CD14-positive monocyte (primary cell): ENCODE measurements at regions of chr19 and their contacts with region 1.

Region 1: DNA sequence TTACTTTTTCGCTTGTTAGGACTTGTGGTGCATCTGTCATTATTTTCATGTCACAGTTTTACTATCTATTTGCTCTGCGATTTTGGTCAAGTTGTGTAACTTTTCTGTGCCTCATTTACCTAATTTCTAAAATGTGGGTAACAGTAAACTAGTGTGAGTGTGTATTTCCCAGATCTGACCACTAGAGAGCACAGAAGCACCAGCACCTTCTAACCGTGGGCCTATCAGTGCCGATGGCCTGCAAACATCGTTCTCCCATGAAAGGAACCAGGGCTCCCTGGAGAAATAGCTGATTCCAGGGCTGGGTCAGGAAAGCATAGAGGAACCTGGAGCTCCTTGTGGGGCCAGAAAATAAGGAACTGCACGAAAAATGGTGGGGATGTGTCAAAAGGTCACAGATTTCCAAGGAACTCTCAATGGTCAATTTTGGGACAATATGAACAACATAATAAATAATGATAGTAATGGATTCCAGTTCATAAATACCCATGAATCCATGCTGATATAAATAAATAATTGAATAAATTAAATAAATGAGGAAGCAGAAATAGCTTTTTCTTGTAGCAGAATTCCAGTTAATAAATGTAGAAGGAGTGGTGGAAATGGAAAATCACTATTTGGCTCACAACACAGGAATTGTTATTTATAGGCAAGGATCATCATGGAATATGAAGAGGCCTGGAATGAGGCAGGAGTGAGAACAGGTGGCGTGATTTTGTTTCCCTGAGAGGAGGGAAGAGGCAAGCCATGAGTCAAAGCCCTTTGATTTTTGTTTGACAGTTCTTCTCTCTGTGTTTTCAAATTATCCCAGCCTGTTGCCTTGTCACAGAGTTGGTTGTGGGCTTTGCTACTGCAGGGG is 31.1 kb downstream of the CEACAM8 start:
- DNase-seq: peak; percentile 30 to 51 (median 50)
- H3K4me3 ChIP-seq: no peak overlapping the region
- H3K4me3 Mint-ChIP-seq: no peak overlapping the region
- H3K27ac ChIP-seq: no peak overlapping the region
- H3K27ac Mint-ChIP-seq: no peak overlapping the region
- H3K4me1 ChIP-seq: peaks cover 32 to 33% of the 10 kb centered on the region in 2 donors
- H3K4me1 Mint-ChIP-seq: peaks cover 43% of the 10 kb centered on the region
- H3K27me3 ChIP-seq: peaks cover 0 to 15% of the 10 kb centered on the region in 2 donors
- H3K27me3 Mint-ChIP-seq: peaks cover 17 to 28% (median 23%) of the 10 kb centered on the region in 3 donors
- CTCF ChIP-seq: peak; percentile 78

Region 2: GRCh38 chr19:42420055-42420544 is 143.5 kb before region 1 on chr19:
- intact Hi-C with region 1: no loop called
- DNase-seq: peak in 2 of 3 donors; percentile 18 to 41
- H3K4me3 ChIP-seq: no peak overlapping the region
- H3K4me3 Mint-ChIP-seq: no peak overlapping the region
- H3K27ac ChIP-seq: no peak overlapping the region
- H3K27ac Mint-ChIP-seq: peak overlapping the region in 1 of 7 donors; percentile 57
- H3K4me1 ChIP-seq: peaks cover 23 to 37% of the 10 kb centered on the region in 2 donors
- H3K4me1 Mint-ChIP-seq: peaks cover 38% of the 10 kb centered on the region
- H3K27me3 ChIP-seq: peaks cover 0 to 32% of the 10 kb centered on the region in 2 donors
- H3K27me3 Mint-ChIP-seq: peaks cover 26 to 40% (median 35%) of the 10 kb centered on the region in 3 donors
- CTCF ChIP-seq: peak; percentile 50

Region 3: GRCh38 chr19:42548552-42548951 is 15.0 kb before region 1 on chr19:
- intact Hi-C with region 1: no loop called
- DNase-seq: no peak
- H3K4me3 ChIP-seq: no peak overlapping the region
- H3K4me3 Mint-ChIP-seq: peak overlapping the region in 1 of 2 donors; percentile 55
- H3K27ac ChIP-seq: no peak overlapping the region
- H3K27ac Mint-ChIP-seq: no peak overlapping the region
- H3K4me1 ChIP-seq: peaks cover 13 to 14% of the 10 kb centered on the region in 2 donors
- H3K4me1 Mint-ChIP-seq: peaks cover 16% of the 10 kb centered on the region
- H3K27me3 ChIP-seq: peaks cover 10 to 59% of the 10 kb centered on the region in 2 donors
- H3K27me3 Mint-ChIP-seq: peaks cover 60 to 72% (median 62%) of the 10 kb centered on the region in 3 donors
- CTCF ChIP-seq: no peak

Region 4: DNA sequence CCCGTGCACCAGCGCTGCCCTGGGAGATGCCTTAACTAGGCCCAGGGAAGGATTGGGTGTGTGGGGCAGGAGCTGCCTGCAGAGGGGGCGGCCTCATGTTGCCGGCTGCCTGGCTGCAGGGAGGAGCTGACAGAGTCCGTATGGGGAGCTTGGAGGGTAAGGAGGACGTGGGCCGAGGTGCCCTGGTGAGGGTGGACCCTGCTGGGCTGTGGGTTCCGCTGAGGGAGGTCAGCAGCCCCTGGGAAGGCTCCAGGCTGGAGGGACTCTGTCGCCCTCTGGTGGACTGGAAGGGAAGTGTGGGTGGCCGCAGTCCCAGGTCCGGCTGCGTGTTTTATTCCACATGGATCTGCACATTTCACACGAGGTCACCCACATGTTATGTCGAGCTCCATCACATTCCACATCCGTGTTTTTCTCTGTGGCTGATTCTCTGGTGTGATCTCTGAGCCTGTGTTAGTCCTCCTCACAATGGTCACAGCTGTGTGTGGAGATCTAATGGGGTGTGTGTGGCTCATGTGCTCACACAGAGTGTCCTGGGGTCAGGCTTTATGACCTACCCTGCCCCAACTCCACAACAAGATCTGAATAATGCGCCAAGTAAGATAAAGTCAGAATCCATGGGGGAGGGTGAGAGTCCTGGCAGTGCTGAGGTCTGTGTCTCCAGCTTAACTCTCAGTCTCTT is 33.0 kb after region 1 on chr19:
- intact Hi-C with region 1: loop called in 1 of 2 experiments (anchors 5 kb)
- DNase-seq: peak; percentile 21 to 50 (median 43)
- H3K4me3 ChIP-seq: no peak overlapping the region
- H3K4me3 Mint-ChIP-seq: no peak overlapping the region
- H3K27ac ChIP-seq: no peak overlapping the region
- H3K27ac Mint-ChIP-seq: no peak overlapping the region
- H3K4me1 ChIP-seq: no peaks in the 10 kb centered on the region
- H3K4me1 Mint-ChIP-seq: peaks cover 29% of the 10 kb centered on the region
- H3K27me3 ChIP-seq: peaks cover 0 to 3% of the 10 kb centered on the region in 2 donors
- H3K27me3 Mint-ChIP-seq: peaks cover 2 to 23% (median 17%) of the 10 kb centered on the region in 3 donors
- CTCF ChIP-seq: peak; percentile 100